Heart right ventricle (tissue), 16 donors: ENCODE measurements at regions of chr7 and their contacts with region 1.

Region 1: GRCh38 chr7:145644426-145645154 is 472.0 kb upstream of the CNTNAP2 start:
- DNase-seq: no peak
- ATAC-seq: no peak
- H3K4me3 ChIP-seq: no peak overlapping the region
- H3K27ac ChIP-seq: no peak overlapping the region
- H3K4me1 ChIP-seq: no peaks in the 10 kb centered on the region
- H3K27me3 ChIP-seq: no peaks in the 10 kb centered on the region
- CTCF ChIP-seq: no peak

Region 2: GRCh38 chr7:145584401-145584800 is 60.2 kb before region 1 on chr7:
- intact Hi-C with region 1: loop called in 1 of 10 experiments (anchors 10 kb)
- DNase-seq: no peak
- ATAC-seq: no peak
- H3K4me3 ChIP-seq: no peak overlapping the region
- H3K27ac ChIP-seq: no peak overlapping the region
- H3K4me1 ChIP-seq: no peaks in the 10 kb centered on the region
- H3K27me3 ChIP-seq: no peaks in the 10 kb centered on the region
- CTCF ChIP-seq: no peak

Region 3: DNA sequence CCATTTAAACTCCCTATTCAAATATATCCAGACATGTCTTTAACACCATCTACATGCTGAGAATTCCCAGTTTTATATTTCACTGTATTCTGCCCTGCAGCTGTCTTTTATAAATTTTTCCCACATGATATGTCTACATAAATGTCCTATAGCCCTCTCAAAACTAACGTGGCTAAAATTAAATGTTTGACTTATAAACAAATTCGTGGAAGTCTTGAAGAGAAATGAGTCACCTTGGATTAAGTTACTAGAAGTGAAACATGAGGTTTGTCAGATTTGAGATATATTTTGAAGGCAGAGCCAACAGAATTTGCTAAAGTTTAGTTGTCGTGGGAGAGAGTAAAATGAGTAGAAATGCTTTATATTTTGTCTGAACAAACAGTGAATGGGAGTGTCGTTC is 85.1 kb after region 1 on chr7:
- intact Hi-C with region 1: no loop called
- DNase-seq: no peak
- ATAC-seq: no peak
- H3K4me3 ChIP-seq: no peak overlapping the region
- H3K27ac ChIP-seq: no peak overlapping the region
- H3K4me1 ChIP-seq: no peaks in the 10 kb centered on the region
- H3K27me3 ChIP-seq: no peaks in the 10 kb centered on the region
- CTCF ChIP-seq: no peak